Ovary (tissue), 10 donors: ENCODE measurements at regions of chr2 and their contacts with region 1.

Region 1: GRCh38 chr2:101307950-101308431 is 510 bp downstream of the RNF149 start:
- DNase-seq: peak in 4 of 5 donors; percentile 28 to 59 (median 38)
- H3K4me3 ChIP-seq: peak overlapping the region; percentile 80
- H3K27ac ChIP-seq: peak overlapping the region; percentile 77 to 84
- H3K4me1 ChIP-seq: peaks cover 14% of the 10 kb centered on the region
- H3K27me3 ChIP-seq: no peaks in the 10 kb centered on the region
- CTCF ChIP-seq: no peak
- EP300 ChIP-seq: no peak
- POLR2A ChIP-seq: no peak

Region 2: DNA sequence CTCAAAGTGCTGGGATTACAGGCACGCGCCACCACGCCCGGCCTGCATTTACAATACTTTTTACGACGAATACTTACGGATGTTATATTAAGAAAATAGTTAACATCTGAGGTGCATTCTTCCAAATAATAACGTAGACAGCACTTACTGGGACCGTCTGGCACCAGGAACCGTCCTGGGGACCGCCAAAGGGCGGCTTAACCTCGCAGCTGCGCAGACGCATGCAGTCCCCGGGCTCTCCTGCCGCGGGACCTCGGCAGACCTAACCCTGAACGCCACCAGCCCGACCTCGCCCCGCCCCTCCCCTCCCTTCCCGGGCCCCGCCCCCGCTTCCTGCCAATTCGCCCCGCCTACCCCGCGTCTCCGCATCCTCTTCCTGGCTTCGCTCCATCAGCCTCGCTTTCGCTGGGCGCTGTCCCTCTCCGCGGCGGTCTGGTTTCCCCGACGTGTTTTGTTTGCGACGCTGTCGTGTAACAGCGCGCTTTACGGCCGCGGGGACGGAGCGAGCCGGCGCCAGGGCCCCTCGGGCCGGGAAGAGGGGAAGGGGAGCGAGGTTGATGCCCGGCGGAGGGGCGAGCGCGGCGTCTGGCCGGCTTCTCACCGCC is 55.5 kb before region 1 on chr2 and contains the start of gene CNOT11:
- intact Hi-C with region 1: loop called in 1 of 4 experiments (anchors 2 kb)
- DNase-seq: peak; percentile 99 to 100 (median 100)
- H3K4me3 ChIP-seq: peak within 1 kb of the TSS; percentile 80
- H3K27ac ChIP-seq: peak within 1 kb of the TSS; percentile 56 to 79
- H3K4me1 ChIP-seq: peaks cover 11% of the 10 kb centered on the region
- H3K27me3 ChIP-seq: no peaks in the 10 kb centered on the region
- CTCF ChIP-seq: no peak
- EP300 ChIP-seq: no peak
- POLR2A ChIP-seq: peak; percentile 70
- total RNA-seq, gene CNOT11: 17.6 to 26.9 (median 21.0) TPM